H1 (cell line): ENCODE measurements at regions of chr18 and their contacts with region 1.

Region 1: DNA sequence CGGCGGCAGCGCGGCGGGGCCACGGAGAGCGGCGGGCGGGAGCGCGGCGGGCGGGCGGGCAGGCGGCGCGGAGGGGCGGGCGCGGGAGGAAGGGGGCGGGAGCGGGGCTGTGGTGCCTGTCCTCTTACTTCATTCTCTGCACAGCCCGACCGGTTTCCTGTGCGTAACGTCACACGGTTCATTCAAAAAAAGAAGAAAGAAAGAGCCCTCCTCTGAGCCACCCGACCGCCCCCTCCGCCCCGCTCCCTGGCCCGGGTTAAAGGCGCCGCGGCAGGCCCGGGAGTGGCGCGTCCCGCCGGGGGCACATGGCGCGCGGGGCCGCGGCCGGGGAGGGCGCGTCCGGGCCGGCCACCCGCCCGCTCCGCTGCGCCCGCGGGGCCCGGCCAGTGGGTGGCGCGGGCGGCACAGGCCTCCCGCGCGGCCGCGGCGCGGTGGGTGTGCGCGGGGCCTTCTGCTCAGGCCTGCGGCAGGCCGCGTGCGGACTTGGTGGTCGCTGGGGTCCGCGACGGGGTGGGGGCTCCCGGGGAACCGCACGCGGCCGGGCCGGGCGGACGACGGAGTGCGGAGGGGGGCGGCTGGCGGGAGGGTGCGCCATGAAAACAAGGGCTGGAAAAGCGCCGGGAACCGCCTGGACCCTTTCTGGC is 599 bp upstream of the BCL2 start:
- DNase-seq: peak in 1 of 2 experiments; percentile 63
- H3K4me3 ChIP-seq: peak overlapping the region; percentile 43 to 77 (median 62)
- H3K27ac ChIP-seq: no peak overlapping the region
- H3K4me1 ChIP-seq: peaks cover 4 to 10% (median 8%) of the 10 kb centered on the region in 4 experiments; a peak in 4 of 7 replicates
- H3K27me3 ChIP-seq: peaks cover 0 to 37% (median 22%) of the 10 kb centered on the region in 4 experiments; a peak in 6 of 7 replicates
- CTCF ChIP-seq: no peak
- EP300 ChIP-seq: no peak
- POLR2A ChIP-seq: no peak
- RAD21 ChIP-seq: no peak

Region 2: DNA sequence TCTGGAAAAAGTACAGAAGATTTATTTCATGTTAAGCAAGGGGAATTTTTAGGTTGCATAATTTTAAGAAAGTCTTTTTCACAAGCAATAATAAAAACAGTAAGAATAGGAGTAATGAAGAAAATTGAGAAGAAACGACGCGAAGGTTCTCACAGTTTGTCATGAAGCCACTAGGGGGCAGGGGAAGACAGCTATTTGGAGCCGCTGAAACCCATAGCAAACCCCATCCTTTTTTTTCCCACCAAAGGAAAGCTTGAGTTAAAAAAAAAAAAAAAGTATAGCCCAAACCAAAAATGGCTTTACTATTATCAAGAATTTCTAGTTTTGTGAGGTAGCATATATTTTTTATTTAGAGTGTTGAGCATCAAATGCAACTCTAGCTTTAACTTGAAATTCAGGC is 303.9 kb before region 1 on chr18:
- CTCF ChIA-PET with region 1: interaction called, 95 read pairs
- POLR2A ChIA-PET with region 1: no interaction called
- DNase-seq: peak in 1 of 2 experiments; percentile 50
- H3K4me3 ChIP-seq: no peak overlapping the region
- H3K27ac ChIP-seq: no peak overlapping the region
- H3K4me1 ChIP-seq: no peaks in the 10 kb centered on the region
- H3K27me3 ChIP-seq: no peaks in the 10 kb centered on the region
- CTCF ChIP-seq: peak; percentile 44 to 76 (median 74)
- EP300 ChIP-seq: no peak
- POLR2A ChIP-seq: no peak
- RAD21 ChIP-seq: peak; percentile 89 to 93

Region 3: GRCh38 chr18:63119647-63120046 is 200.5 kb before region 1 on chr18:
- CTCF ChIA-PET with region 1: interaction called, 14 read pairs
- POLR2A ChIA-PET with region 1: no interaction called
- DNase-seq: peak in 1 of 2 experiments; percentile 3
- H3K4me3 ChIP-seq: no peak overlapping the region
- H3K27ac ChIP-seq: no peak overlapping the region
- H3K4me1 ChIP-seq: no peaks in the 10 kb centered on the region
- H3K27me3 ChIP-seq: no peaks in the 10 kb centered on the region
- CTCF ChIP-seq: peak; percentile 62 to 71 (median 69)
- EP300 ChIP-seq: no peak
- POLR2A ChIP-seq: no peak
- RAD21 ChIP-seq: peak; percentile 71 to 79

Region 4: DNA sequence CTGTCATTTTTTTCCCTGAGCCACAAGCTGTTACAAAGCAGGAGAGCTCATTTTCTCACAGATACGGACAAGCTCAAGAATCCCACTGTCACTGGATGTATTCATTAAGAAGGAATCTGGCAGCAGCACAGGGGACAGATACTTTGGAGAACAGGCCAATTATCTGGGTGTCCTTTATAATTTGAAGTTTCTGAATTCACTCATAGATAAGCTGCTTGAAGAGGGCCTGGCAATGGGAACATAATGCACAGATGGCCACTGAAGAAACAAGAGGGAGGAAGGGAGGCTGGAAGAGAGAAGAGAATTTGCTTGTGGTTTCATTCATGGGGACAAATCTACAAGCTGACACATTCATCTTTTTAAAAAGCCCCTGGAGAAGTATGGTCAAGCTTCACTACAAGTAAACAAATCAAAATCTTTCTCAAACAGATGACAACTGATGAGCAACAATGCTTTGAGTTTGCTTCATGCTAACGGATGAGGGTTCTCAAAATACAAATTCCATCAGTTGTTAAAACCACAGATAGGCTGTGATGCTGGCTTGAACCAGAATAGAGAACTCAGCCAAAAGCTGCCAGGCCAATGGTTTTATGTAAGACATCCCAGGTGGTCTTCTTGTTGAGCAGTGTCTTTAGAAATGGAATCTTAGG is 12.5 kb before region 1 on chr18:
- CTCF ChIA-PET with region 1: interaction called, 16 read pairs
- POLR2A ChIA-PET with region 1: no interaction called
- DNase-seq: no peak
- H3K4me3 ChIP-seq: no peak overlapping the region
- H3K27ac ChIP-seq: no peak overlapping the region
- H3K4me1 ChIP-seq: no peaks in the 10 kb centered on the region
- H3K27me3 ChIP-seq: no peaks in the 10 kb centered on the region
- CTCF ChIP-seq: no peak
- EP300 ChIP-seq: no peak
- POLR2A ChIP-seq: no peak
- RAD21 ChIP-seq: no peak

Region 5: DNA sequence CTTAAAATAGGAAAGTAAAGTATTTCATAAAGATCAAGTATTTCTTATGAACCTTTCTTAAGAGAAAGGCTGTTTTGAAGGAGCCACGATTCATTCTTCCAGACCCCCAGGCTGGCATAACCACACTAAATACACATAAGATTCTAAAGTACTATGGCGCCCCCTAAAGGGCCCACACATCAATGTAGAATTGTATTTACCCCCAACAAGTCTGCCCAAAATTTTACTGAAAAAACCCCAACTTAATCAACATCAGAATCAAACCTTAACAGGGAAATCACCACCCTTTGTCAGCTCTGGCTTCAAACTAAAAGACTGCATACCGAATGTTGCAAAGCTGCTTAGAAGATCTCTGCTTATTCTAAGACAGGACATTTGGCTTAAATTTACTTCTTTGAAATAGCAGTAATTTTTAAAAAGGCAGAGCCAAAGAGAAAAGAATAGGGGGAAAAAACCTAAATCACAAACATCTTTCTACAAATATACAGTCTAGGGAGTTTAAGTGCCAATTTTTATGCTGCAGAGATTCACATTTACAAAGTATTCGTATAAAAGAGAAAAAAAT is 19.8 kb after region 1 on chr18:
- CTCF ChIA-PET with region 1: interaction called, 96 read pairs
- POLR2A ChIA-PET with region 1: interaction called, 3 read pairs
- DNase-seq: peak in 1 of 2 experiments; percentile 62
- H3K4me3 ChIP-seq: peak overlapping the region in 1 of 4 experiments; percentile 41; a peak in 2 of 8 replicates
- H3K27ac ChIP-seq: no peak overlapping the region
- H3K4me1 ChIP-seq: peaks cover 0 to 7% (median 3%) of the 10 kb centered on the region in 4 experiments; a peak in 3 of 7 replicates
- H3K27me3 ChIP-seq: no peaks in the 10 kb centered on the region
- CTCF ChIP-seq: peak in 2 of 3 experiments; percentile 51 to 60; a peak in 3 of 4 replicates
- EP300 ChIP-seq: no peak
- POLR2A ChIP-seq: no peak
- RAD21 ChIP-seq: peak; percentile 67 to 72